HepG2 (cell line): ENCODE measurements at regions of chr12 and their contacts with region 1.

Region 1: DNA sequence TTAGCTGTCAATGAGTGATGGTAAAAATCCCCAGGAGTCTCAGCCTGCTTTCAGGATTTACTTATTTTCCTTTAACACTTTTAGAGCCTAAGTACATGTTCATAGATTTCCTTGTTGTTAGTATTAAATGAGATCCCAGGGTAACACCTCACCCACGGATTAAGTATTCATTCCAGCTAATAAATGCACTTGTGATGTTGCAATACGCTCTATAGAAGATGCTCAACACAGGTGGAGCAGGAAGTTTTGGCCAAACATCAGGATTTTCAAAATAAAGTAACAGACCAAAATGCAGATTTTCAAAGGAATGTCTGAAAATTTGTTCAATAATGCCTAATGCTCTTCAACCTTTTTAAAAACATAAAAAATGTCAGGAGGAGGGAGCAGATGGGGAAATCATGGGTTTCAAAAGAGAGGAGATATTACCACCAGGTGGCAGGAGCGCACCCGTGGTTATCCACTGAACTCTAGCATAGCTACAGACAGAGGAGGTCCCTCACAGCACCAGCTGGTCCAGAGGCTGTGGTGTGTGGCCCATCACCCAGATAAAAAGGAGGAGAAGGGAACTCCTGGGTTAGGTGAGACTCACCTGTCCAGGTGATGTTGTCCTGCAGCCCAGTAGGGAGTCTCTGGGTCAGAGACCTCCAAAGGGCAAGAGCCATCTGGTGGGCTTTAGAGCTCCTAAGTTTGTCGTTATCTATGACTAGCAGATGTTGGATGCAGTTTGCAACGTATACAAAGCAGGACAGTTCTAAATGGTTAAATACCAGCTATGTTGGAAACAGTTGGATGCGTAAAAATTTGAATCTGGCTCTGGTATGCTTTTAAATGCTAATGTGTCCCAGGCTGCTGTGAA is 1158.4 kb upstream of the TMEM132C start:
- DNase-seq: peak; percentile 15
- ATAC-seq: peak; percentile 90
- H3K4me3 ChIP-seq: no peak overlapping the region
- H3K27ac ChIP-seq: no peak overlapping the region
- H3K4me1 ChIP-seq: no peaks in the 10 kb centered on the region
- H3K27me3 ChIP-seq: no peaks in the 10 kb centered on the region
- CTCF ChIP-seq: peak; percentile 59
- EP300 ChIP-seq: no peak
- POLR2A ChIP-seq: no peak
- RAD21 ChIP-seq: peak; percentile 32; the same call in 1 of the 2 replicates

Region 2: GRCh38 chr12:127677537-127678131 is 569.0 kb after region 1 on chr12:
- CTCF ChIA-PET with region 1: no interaction called
- POLR2A ChIA-PET with region 1: no interaction called
- in situ Hi-C with region 1: loop called (anchors 25 kb)
- intact Hi-C with region 1: loop called (anchors 1 kb)
- DNase-seq: peak; percentile 44
- ATAC-seq: peak; percentile 97
- H3K4me3 ChIP-seq: no peak overlapping the region
- H3K27ac ChIP-seq: no peak overlapping the region
- H3K4me1 ChIP-seq: no peaks in the 10 kb centered on the region
- H3K27me3 ChIP-seq: peaks cover 0 to 2% of the 10 kb centered on the region in 2 experiments; a peak in 1 of 5 replicates
- CTCF ChIP-seq: peak; percentile 78
- EP300 ChIP-seq: no peak
- POLR2A ChIP-seq: no peak
- RAD21 ChIP-seq: 0 out of 2 replicates have a peak, but pooled peaks have one; percentile 27